Activated naive CD8-positive, alpha-beta T cell treated with anti-CD3 and anti-CD28 coated beads, Interleukin-2, amount 10 ng/mL, durations not matched to agents 7 days and 5 days (primary cell): ENCODE measurements at regions of chr17 and their contacts with region 1.

Region 1: GRCh38 chr17:1197781-1198490 is 18.2 kb upstream of the ABR start:
- DNase-seq: peak; percentile 79
- ATAC-seq: peak; percentile 71
- H3K4me3 Mint-ChIP-seq: peak overlapping the region; percentile 70
- H3K27ac Mint-ChIP-seq: peak overlapping the region; percentile 94
- H3K4me1 Mint-ChIP-seq: peaks cover 67% of the 10 kb centered on the region
- H3K27me3 Mint-ChIP-seq: no peaks in the 10 kb centered on the region

Region 2: GRCh38 chr17:1229432-1229899 is 31.5 kb after region 1 on chr17:
- POLR2A ChIA-PET with region 1: interaction called, 10 read pairs
- DNase-seq: peak; percentile 74
- ATAC-seq: peak; percentile 65
- H3K4me3 Mint-ChIP-seq: peak overlapping the region; percentile 72
- H3K27ac Mint-ChIP-seq: no peak overlapping the region
- H3K4me1 Mint-ChIP-seq: peaks cover 22% of the 10 kb centered on the region
- H3K27me3 Mint-ChIP-seq: peaks cover 45% of the 10 kb centered on the region